CD4-positive, alpha-beta T cell (primary cell): ENCODE measurements at regions of chr19 and their contacts with region 1.

Region 1: DNA sequence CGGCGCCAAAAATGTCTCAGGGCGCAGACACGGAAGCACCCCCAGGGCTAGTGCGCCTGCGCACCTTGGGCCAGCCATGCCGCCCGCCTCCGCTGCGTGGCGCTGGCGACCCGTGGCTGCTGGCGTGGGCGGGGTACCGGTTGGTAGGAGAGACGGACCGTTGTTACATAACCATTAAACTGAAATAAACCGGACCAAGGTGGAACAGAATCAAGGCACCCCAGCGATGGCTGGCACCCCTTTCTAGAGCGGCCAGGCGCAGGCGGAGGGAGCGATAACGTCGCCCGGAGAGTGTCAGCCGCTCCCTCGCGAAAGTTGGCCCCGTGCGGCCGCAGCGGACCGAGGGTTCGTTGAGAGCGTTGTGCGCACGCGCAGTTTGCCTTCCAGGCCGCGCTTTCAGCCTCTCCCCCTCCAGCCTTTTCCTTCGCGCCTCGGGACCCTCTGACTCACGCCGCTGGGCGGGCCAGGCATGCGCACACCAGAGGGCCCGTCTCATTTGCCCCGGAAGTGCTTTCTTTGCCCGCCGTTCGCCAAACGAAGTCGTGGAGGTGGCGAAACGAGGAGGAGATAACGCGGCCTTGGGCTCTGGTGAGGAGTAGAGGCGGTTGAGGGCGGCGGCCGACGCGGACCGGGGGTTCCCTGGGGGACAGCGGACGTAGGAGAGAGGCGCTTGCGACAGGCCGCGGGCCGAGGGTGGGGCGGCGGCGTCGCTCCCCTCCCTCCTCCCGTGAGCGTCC is at the starts of genes PLEKHJ1 and SF3A2:
- DNase-seq: peak; percentile 94 to 99 (median 98)
- ATAC-seq: peak; percentile 81
- H3K4me3 ChIP-seq: peak within 1 kb of the TSS; percentile 80
- H3K4me3 Mint-ChIP-seq: peak within 1 kb of the TSS; percentile 98
- H3K27ac ChIP-seq: peak within 1 kb of the TSS; percentile 98 to 99
- H3K27ac Mint-ChIP-seq: peak within 1 kb of the TSS; percentile 99
- H3K4me1 ChIP-seq: peaks cover 79% of the 10 kb centered on the region
- H3K4me1 Mint-ChIP-seq: peaks cover 63% of the 10 kb centered on the region
- H3K27me3 ChIP-seq: no peaks in the 10 kb centered on the region
- H3K27me3 Mint-ChIP-seq: peaks cover 4% of the 10 kb centered on the region
- CTCF ChIP-seq: peak; percentile 99
- total RNA-seq, gene PLEKHJ1: 21.4 to 23.2 TPM
- total RNA-seq, gene SF3A2: 186 to 194 TPM

Region 2: DNA sequence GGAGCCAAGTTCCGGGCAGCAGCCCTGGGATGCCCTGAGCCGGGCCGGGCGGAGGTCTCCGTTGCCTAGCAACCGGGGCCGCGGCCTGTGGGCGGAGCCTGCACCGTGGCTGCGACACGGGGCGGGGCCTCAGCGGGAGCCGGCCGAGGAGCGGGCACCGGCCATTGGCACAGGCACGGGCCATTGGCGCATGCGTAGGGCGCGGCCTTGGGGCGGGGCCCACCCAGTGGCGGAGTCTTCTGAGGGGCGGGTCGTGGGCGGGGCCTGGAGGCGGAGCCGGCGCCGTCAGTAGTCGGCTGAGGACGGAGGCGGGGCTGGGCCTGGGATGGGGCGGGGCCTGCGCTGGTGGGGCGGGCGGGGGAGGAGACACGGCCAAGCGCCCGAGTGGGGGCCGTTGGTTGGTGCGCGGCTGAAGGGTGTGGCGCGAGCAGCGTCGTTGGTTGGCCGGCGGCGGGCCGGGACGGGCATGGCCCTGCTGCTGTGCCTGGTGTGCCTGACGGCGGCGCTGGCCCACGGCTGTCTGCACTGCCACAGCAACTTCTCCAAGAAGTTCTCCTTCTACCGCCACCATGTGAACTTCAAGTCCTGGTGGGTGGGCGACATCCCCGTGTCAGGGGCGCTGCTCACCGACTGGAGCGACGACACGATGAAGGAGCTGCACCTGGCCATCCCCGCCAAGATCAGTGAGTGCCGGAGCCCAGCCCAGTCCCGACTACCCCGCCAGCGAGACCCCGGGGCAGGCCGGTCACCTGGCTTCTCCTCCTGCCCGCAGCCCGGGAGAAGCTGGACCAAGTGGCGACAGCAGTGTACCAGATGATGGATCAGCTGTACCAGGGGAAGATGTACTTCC is 139.8 kb before region 1 on chr19 and contains the start of gene IZUMO4:
- CTCF ChIA-PET with region 1: no interaction called
- POLR2A ChIA-PET with region 1: no interaction called
- intact Hi-C with region 1: loop called in 1 of 2 experiments (anchors 1 kb)
- DNase-seq: peak; percentile 99 to 100 (median 100)
- ATAC-seq: peak; percentile 79
- H3K4me3 ChIP-seq: peak within 1 kb of the TSS; percentile 93
- H3K4me3 Mint-ChIP-seq: peak within 1 kb of the TSS; percentile 97
- H3K27ac ChIP-seq: peak within 1 kb of the TSS; percentile 75 to 79
- H3K27ac Mint-ChIP-seq: peak within 1 kb of the TSS; percentile 96
- H3K4me1 ChIP-seq: peaks cover 54% of the 10 kb centered on the region
- H3K4me1 Mint-ChIP-seq: peaks cover 25% of the 10 kb centered on the region
- H3K27me3 ChIP-seq: no peaks in the 10 kb centered on the region
- H3K27me3 Mint-ChIP-seq: no peaks in the 10 kb centered on the region
- CTCF ChIP-seq: peak; percentile 38
- total RNA-seq, gene IZUMO4: 17.4 to 17.9 TPM

Region 3: GRCh38 chr19:2253106-2254053 is 16.9 kb after region 1 on chr19:
- CTCF ChIA-PET with region 1: interaction called, 5 read pairs
- POLR2A ChIA-PET with region 1: interaction called, 46 read pairs
- intact Hi-C with region 1: loop called (anchors 1 to 2 kb)
- DNase-seq: peak in 10 of 14 experiments; percentile 55 to 76 (median 64)
- ATAC-seq: peak; percentile 47
- H3K4me3 ChIP-seq: peak overlapping the region; percentile 50
- H3K4me3 Mint-ChIP-seq: peak overlapping the region; percentile 80
- H3K27ac ChIP-seq: no peak overlapping the region
- H3K27ac Mint-ChIP-seq: peak overlapping the region; percentile 64
- H3K4me1 ChIP-seq: peaks cover 67% of the 10 kb centered on the region
- H3K4me1 Mint-ChIP-seq: peaks cover 17% of the 10 kb centered on the region
- H3K27me3 ChIP-seq: peaks cover 23 to 26% of the 10 kb centered on the region in 2 experiments
- H3K27me3 Mint-ChIP-seq: no peaks in the 10 kb centered on the region
- CTCF ChIP-seq: peak; percentile 70

Region 4: DNA sequence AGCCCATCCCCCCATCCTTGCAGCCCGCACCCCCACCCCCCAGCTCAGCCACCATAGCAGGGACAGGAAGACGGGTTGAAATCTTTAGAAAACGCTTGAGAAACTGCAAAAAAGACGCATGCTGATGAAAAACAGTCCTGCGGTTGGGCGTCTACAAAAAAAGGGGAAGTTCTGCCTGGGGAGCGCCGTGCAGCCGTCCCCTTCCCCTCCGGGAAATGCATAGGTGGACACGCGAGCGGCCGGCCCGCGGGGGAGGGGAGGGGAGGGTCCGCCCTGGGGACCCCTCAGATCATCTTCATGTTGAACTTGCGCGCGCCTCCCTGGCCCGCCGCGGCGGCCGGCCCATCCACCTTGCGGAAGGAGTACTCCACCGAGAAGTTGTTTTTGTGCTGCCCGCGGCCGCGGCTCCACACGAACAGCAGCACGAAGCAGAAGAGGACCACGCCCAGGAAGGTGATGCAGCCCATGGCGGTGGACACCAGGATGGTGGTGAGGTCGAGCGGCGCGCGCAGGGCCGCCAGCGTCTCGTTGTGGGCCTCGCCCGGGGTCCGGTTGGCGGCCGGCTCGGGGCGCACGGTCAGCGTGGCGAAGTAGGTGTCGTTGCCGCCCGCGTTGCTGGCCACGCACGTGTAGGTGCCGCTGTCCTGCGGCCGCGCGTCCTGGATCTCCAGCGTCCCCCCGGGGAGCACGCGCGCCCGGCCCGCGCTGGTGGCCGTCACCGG is 53.4 kb after region 1 on chr19:
- CTCF ChIA-PET with region 1: no interaction called
- POLR2A ChIA-PET with region 1: interaction called, 13 read pairs
- intact Hi-C with region 1: no loop called
- DNase-seq: peak in 13 of 14 experiments; percentile 40 to 83 (median 65)
- ATAC-seq: peak; percentile 72
- H3K4me3 ChIP-seq: peak overlapping the region; percentile 69
- H3K4me3 Mint-ChIP-seq: peak overlapping the region; percentile 83
- H3K27ac ChIP-seq: peak overlapping the region; percentile 44 to 50
- H3K27ac Mint-ChIP-seq: peak overlapping the region; percentile 83
- H3K4me1 ChIP-seq: peaks cover 46% of the 10 kb centered on the region
- H3K4me1 Mint-ChIP-seq: peaks cover 26% of the 10 kb centered on the region
- H3K27me3 ChIP-seq: no peaks in the 10 kb centered on the region
- H3K27me3 Mint-ChIP-seq: no peaks in the 10 kb centered on the region
- CTCF ChIP-seq: no peak

Region 5: GRCh38 chr19:2427429-2428320 is 191.2 kb after region 1 on chr19 and contains the start of gene TIMM13:
- CTCF ChIA-PET with region 1: no interaction called
- POLR2A ChIA-PET with region 1: interaction called, 5 read pairs
- intact Hi-C with region 1: loop called in 1 of 2 experiments (anchors 1 kb)
- DNase-seq: peak; percentile 92 to 99 (median 96)
- ATAC-seq: peak; percentile 93
- H3K4me3 ChIP-seq: peak within 1 kb of the TSS; percentile 86
- H3K4me3 Mint-ChIP-seq: peak within 1 kb of the TSS; percentile 92
- H3K27ac ChIP-seq: peak within 1 kb of the TSS; percentile 91 to 98
- H3K27ac Mint-ChIP-seq: peak within 1 kb of the TSS; percentile 93
- H3K4me1 ChIP-seq: peaks cover 31% of the 10 kb centered on the region
- H3K4me1 Mint-ChIP-seq: peaks cover 15% of the 10 kb centered on the region
- H3K27me3 ChIP-seq: no peaks in the 10 kb centered on the region
- H3K27me3 Mint-ChIP-seq: no peaks in the 10 kb centered on the region
- CTCF ChIP-seq: no peak
- total RNA-seq, gene TIMM13: 17.3 to 22.3 TPM